ENCODE measurements at regions of chr5 and their contacts with region 1.

Region 1: GRCh38 chr5:142938266-142938880 is 168.2 kb downstream of the ARHGAP26 start:
- DNase-seq: no peak
- ATAC-seq: no peak
- H3K4me3 ChIP-seq: no peak overlapping the region
- H3K27ac ChIP-seq: peak overlapping the region in 2 of 4 donors; percentile 8 to 37
- H3K4me1 ChIP-seq: peaks cover 44 to 66% of the 10 kb centered on the region in 2 donors
- H3K27me3 ChIP-seq: no peaks in the 10 kb centered on the region
- CTCF ChIP-seq: no peak
- POLR2A ChIP-seq: no peak

Region 2: DNA sequence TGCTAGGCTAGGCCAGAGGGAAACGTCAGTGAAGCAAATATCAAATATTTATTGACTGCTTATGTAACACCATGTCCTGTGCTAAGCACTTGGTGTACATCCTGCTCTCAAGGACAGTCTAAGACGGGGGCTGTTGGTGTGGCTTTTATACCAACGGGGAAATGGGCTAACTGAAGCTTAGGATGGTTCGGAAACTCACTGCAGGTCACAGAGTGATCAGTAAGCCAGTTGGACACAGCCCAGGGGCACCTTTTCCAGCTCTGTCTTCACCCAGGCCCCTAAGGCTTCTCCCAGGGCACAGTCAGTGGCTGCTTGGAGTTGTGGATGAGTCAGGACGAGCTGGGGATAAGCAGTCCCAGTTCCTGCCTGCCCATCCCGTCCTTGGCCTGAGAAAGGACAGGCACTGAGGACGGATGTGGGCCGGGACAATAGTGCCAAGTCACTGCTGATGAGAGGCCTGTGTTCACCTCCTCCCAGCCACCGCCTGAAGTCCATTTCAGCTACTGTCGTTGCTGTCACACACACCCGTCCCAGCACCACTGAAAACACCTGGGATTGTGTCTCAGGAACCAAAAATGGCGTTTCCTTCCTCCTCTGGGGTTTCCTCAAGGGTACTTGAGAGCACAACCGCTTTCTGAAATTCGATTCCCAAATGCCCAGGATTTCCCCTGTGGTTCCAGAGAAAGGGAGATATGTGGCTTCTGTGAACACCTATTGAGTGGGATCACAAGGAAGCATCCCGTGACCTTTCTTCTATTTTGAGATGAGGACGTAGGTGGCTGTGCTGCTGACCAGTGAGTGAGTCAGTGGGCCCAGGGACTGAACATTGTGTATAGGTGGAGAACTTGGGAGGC is 596.0 kb before region 1 on chr5:
- in situ Hi-C with region 1: no loop called
- intact Hi-C with region 1: no loop called
- DNase-seq: no peak
- ATAC-seq: peak; percentile 36
- H3K4me3 ChIP-seq: no peak overlapping the region
- H3K27ac ChIP-seq: peak overlapping the region in 3 of 4 donors; percentile 15 to 53 (median 46)
- H3K4me1 ChIP-seq: no peaks in the 10 kb centered on the region
- H3K27me3 ChIP-seq: peaks cover 0 to 2% (median 0%) of the 10 kb centered on the region in 3 donors
- CTCF ChIP-seq: no peak
- POLR2A ChIP-seq: peak in 1 of 2 donors; percentile 17

Region 3: DNA sequence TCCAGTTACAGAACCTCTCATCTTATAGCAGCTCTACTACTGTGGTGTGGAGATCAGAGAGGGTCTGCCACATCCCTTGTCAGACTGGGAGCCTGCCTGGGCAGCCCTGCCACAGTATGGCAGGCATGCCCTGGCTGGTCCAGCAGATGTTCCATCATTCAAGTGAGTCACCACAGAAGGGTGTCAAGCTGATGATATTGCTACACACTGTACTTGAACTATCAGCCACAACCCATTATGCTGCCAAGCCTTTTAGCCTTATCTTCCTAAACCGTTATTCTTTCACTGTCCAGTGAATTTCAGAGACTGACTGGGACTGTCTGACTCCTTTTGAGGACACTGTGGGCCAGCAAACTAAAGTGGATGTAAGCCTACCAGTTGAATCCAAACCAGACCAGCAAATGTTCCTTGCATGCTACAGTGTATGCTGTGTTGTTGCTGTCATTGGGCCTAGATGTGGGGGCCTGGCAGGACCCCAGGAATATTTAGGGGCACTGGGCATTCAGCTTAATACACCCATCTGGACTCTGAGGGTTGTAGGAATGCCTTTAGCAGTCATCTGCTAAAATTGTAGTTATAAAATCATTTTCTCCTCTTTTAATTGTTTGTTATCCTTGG is 262.5 kb after region 1 on chr5:
- in situ Hi-C with region 1: no loop called
- intact Hi-C with region 1: loop called (anchors 10 kb)
- DNase-seq: peak; percentile 75 to 82
- ATAC-seq: peak; percentile 99 to 100
- H3K4me3 ChIP-seq: no peak overlapping the region
- H3K27ac ChIP-seq: peak overlapping the region; percentile 63 to 84 (median 72)
- H3K4me1 ChIP-seq: peaks cover 32 to 34% of the 10 kb centered on the region in 2 donors
- H3K27me3 ChIP-seq: no peaks in the 10 kb centered on the region
- CTCF ChIP-seq: no peak
- POLR2A ChIP-seq: no peak

Measured in gastrocnemius medialis (tissue), 4 donors.